GM18951 (cell line): ENCODE measurements at regions of chr19 and their contacts with region 1.

Region 1: DNA sequence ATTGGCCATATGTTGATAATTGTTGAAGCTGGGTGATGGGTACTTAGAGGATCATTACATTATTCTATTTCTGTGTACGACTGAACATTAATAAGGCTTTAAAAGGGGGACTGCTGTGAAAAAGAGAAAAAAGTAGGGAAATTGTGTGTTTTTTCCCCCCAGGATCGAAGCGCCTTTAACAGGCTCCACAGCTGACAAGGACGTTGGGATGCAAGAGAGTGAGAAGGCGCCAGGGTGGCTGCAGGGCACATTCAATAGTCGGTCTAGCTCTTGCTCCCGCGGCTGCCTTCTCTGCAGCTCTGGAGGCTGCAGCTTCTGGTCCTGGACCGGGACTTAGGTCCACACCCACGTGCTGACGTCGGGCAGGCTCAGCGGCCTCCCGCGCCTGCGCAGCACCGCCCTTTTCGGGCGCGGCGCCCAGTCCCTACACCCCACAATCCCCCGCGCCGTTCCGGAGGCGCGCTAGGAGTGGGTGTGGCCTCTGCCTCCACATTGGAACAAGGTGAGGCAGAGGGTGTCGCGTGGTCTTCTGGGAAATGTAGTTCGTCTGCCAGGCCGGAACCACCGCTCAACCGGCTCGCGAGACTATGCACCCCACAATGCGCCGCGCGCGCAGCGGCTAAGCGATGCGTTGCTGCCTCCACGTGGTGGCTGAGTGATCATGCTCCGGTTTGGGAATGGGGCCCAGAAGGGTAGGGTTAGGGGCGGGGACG is 4.9 kb upstream of the LRFN3 start:
- POLR2A ChIP-seq: peak; percentile 99

Region 2: DNA sequence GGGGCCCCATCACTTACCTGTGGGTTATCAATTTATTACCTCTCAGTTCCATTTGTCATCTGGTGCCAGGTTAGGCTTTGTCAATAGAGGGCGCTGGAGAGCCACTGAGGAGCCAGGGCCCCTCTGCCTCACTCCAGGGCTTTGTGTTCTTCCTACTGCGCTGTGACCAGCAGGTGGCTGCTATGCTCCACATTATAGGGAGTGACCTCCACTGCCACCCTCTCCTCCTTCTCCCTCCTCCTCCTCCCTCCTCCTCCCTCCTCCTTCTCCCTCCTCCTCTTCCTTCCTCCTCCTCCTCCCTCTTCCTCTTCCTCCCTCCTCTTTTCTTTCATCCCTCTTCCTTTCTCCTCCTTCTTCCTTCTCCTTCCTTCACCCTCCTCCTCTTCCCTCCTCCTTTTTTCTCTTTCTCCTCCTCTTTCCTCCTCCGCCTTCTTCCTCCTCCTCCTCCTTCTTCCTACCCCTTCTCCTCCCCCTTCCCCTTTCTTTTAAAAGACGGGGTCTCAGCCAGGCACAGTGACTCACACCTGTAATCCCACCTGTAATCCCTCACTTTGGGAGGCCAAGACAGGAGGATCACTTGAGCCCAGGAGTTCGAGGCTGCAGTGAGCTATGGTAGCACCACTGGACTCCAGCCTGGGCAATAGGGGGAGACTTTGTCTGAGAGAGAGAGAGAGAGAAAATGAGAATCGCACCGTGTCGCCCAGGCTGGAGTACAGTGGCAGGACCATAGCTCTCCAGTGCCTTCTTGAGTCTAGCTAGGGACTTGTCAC is 237.3 kb before region 1 on chr19:
- in situ Hi-C with region 1: loop called (anchors 10 kb)
- POLR2A ChIP-seq: no peak

Region 3: DNA sequence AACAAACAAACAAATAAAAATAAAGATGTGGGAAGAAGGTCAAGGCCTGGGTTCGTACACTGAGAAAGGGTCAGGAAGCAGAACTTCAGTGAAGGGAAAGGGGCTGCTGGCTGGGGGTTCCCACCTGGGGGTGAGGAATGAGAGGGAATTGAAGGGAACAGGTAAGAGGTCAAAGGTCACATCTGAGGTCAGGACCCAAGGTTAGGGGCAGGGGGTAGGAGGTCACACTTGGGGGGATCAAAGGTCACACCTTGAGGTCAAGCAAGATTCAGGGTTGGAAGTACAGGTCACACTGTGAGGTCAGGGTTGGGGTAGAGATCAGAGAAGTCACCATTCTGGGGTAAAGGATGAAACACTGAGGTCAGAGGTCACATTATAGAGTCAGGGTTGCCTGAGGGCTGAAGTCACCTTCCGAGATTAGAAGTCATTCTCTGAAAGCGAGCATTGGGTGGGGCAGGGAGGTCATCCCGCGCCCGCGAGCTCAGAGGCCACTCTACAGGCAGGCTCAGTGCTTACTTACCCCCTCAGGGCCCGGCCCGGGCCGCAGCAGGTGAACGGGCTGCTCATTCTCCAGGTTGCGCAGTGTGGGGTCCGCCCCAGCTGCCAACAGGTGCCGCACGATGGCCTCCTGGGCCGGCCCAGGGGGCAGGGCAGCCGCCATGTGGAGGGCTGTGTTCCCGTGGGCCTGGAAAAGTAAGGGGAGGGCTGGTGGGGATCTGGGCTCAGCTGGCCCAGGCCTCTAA is 41.8 kb before region 1 on chr19:
- in situ Hi-C with region 1: loop called (anchors 5 kb)
- POLR2A ChIP-seq: no peak